Activated CD8-positive, alpha-beta T cell treated with anti-CD3 and anti-CD28 coated beads, Interleukin-2, amount 10 ng/mL, durations not matched to agents 7 days and 5 days (primary cell): ENCODE measurements at regions of chr2 and their contacts with region 1.

Region 1: DNA sequence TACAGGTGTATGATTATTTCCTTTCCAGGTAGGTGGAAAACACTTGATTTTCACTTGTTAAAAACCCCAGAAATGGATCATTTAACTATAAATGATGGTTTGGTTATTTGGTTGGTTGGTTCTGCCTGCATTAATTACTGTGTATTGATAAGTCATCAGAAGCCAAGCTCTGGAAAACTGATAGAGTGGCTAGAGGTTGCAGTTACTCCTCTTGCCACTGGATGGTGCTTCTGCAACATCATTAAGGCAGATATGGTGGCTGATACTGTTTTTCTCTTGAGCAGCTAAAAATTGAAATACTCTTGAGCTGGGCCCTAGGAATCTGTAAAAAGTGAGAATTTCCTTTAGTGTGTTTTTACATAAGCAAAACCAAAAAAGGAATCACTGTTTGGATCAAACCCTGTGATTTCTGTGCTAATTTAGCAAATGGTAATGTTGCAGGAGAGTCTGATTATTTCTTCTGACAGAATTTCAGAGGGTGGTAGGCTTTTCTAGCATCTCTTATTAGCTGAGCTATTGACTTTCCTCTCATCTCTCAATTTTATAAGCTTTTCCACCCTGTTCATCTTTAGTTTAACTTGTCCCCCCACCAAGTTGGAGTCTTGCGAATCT is 54.3 kb downstream of the RAB10 start:
- DNase-seq: peak; percentile 33
- ATAC-seq: peak; percentile 63
- H3K4me3 Mint-ChIP-seq: no peak overlapping the region
- H3K27ac Mint-ChIP-seq: no peak overlapping the region
- H3K4me1 Mint-ChIP-seq: peaks cover 35% of the 10 kb centered on the region
- H3K27me3 Mint-ChIP-seq: no peaks in the 10 kb centered on the region

Region 2: GRCh38 chr2:25955878-25956535 is 132.1 kb before region 1 on chr2:
- CTCF ChIA-PET with region 1: no interaction called
- POLR2A ChIA-PET with region 1: no interaction called
- DNase-seq: no peak
- ATAC-seq: no peak
- H3K4me3 Mint-ChIP-seq: no peak overlapping the region
- H3K27ac Mint-ChIP-seq: no peak overlapping the region
- H3K4me1 Mint-ChIP-seq: peaks cover 7% of the 10 kb centered on the region
- H3K27me3 Mint-ChIP-seq: no peaks in the 10 kb centered on the region

Region 3: GRCh38 chr2:26068602-26069298 is 19.4 kb before region 1 on chr2:
- CTCF ChIA-PET with region 1: interaction called, 29 read pairs
- POLR2A ChIA-PET with region 1: interaction called, 4 read pairs
- DNase-seq: peak; percentile 72
- ATAC-seq: peak; percentile 86
- H3K4me3 Mint-ChIP-seq: peak overlapping the region; percentile 33
- H3K27ac Mint-ChIP-seq: peak overlapping the region; percentile 74
- H3K4me1 Mint-ChIP-seq: peaks cover 46% of the 10 kb centered on the region
- H3K27me3 Mint-ChIP-seq: no peaks in the 10 kb centered on the region

Region 4: DNA sequence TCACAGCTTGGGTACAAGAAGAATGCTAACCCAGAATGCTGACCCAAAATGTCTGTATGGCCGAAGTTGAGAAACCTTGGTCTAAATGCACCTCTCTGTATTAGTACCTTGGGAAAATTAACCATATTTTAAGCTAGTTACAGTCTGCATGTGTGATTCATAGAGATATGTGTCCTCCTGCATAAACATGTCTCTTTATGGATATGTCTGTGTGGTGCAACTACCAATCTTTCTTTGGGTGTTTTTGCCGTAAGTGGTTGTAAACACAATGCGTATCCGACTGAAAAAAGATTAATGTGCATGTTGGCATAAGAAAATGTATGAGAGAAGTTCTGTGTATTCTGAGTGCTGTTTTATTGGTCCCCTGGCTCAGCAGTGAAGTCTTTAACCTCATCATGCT is 30.5 kb after region 1 on chr2:
- CTCF ChIA-PET with region 1: interaction called, 14 read pairs
- POLR2A ChIA-PET with region 1: no interaction called
- DNase-seq: no peak
- ATAC-seq: no peak
- H3K4me3 Mint-ChIP-seq: no peak overlapping the region
- H3K27ac Mint-ChIP-seq: peak overlapping the region; percentile 10
- H3K4me1 Mint-ChIP-seq: peaks cover 3% of the 10 kb centered on the region
- H3K27me3 Mint-ChIP-seq: no peaks in the 10 kb centered on the region

Region 5: GRCh38 chr2:26144953-26145680 is 57.0 kb after region 1 on chr2:
- CTCF ChIA-PET with region 1: interaction called, 19 read pairs
- POLR2A ChIA-PET with region 1: no interaction called
- DNase-seq: peak; percentile 78
- ATAC-seq: peak; percentile 68
- H3K4me3 Mint-ChIP-seq: no peak overlapping the region
- H3K27ac Mint-ChIP-seq: no peak overlapping the region
- H3K4me1 Mint-ChIP-seq: peaks cover 2% of the 10 kb centered on the region
- H3K27me3 Mint-ChIP-seq: peaks cover 10% of the 10 kb centered on the region